Lower leg skin (tissue), 4 donors: ENCODE measurements at regions of chr19 and their contacts with region 1.

Region 1: DNA sequence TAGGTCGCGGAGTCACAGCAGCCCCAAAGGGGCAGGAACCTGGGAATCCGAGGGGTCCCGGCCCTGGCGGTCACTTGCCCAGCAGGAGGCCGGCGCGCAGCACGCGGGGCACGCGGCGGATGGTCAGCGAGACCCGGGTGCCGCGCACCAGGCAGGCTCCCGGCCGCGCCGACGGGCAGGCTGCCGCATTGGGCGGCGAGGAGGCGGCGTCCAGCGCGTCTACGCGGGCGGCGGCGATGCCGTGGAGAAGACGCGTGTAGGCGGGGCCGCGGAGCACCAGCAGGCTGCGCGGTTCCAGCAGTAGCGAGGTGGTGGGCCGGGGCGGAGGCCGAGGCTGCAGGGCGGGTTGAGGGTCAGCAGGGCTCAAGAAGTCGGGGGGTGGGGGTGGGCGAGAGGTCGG is 607 bp upstream of the SYNE4 start:
- DNase-seq: peak in 1 of 2 donors; percentile 91
- H3K4me3 ChIP-seq: no peak overlapping the region
- CTCF ChIP-seq: no peak
- POLR2A ChIP-seq: no peak

Region 2: DNA sequence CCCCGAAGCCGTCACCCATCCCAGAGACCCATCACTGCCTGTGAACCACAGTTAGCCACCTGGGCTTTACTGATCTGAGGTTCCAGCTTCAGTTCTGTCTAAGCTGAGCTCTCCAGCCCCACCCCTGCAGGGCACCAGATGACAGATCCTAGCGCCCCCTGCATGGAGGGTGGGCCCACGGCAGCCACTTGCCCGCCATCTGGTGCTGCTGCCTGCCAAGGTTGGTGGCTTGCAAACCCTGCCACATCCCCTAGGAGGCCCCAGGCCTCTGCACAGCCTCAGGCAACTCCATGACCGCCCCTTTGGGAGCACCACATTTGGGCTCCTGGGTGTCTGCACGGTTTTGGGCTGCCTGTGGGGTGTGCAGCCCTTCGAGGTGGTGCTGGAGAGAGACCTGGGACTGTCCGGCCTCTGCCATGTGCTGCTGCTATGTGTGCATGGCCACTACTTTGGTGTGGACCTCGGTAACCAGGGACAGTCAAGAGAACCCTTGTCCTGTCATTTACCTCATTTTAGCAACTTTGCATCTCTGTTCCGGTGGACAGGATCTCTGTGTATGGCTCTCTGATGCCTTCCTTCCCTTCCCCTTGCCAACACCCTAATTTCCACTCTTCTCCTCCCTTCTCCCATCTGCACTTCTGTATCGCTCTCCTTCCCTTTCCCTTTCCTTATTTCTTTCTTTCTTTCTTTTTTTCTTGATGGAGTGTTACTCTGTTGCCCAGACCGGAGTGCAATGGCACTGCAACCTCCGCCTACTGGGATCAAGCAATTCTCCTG is 31.6 kb before region 1 on chr19:
- intact Hi-C with region 1: no loop called
- DNase-seq: no peak
- H3K4me3 ChIP-seq: no peak overlapping the region
- CTCF ChIP-seq: no peak
- POLR2A ChIP-seq: no peak

Region 3: DNA sequence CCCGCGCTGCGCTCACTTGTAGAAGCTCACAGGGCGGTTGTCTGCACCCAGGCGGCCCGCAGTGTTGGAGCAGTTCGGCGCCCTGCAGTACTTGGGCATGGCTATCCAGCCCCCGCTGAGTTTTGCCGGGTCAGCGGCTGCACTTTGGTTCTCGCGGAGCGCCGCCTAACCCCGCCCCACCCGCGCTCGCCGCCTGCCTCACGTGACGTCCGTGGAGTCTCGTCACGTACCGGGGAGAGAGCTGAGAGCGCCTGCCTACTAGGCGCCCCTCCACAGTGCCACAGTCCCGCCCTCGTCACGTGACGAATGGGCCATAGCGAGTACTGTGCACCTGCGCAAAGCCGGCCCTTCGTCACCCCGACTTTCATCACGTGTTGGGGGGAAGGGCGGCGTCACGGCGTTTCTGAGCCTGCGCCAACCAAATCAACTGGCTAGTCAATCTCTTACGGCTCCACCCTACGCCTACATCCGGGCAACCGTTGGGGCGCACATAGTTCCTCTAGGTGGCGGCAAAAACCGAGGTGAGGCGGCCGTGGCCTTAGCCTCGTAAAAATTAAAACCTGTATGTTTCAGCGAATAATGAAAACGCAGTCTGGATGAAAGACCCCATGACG is 45.0 kb after region 1 on chr19 and contains the start of gene THAP8:
- intact Hi-C with region 1: loop called (anchors 10 kb)
- DNase-seq: peak; percentile 100
- H3K4me3 ChIP-seq: peak within 1 kb of the TSS; percentile 36
- CTCF ChIP-seq: peak in 1 of 3 donors; percentile 56
- POLR2A ChIP-seq: no peak
- total RNA-seq, gene THAP8: 9.1 to 27.4 (median 9.5) TPM